Head of caudate nucleus (tissue), 42 donors: ENCODE measurements at regions of chr4 and their contacts with region 1.

Region 1: GRCh38 chr4:1693129-1693896 is 9.2 kb upstream of the FAM53A start:
- DNase-seq: peak in 39 of 42 donors; percentile 49 to 88 (median 69)

Region 2: DNA sequence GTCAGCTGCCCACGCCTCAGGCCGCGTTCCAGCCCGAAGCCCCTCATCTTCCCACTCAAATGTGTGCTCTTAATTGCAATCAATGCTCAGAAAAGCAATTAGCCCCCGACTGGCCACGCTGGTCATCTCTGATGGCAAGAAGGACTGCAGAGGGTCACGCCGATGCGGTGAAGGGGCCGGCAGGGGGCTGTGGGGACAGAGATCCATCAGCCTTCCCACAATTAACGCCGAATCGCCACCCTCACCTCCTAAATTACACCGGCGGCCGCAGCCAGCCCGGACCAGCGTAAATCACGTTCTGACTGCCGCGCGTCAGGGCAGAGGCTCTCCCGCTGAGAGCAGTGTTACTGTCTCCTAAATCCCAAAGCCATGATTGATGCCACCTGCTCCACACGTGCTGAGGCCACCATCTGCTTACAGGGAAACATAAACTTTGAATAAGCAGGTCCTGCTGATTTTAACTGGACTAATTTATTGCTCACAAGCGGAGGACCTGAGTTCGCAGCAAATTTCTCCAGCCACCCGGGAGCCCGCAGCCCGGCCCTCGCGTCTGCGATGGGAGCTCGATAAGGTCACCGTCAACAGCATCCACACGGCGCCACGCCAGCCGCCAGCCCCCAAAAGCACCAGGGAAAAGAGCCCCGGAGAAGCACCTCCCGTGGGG is 159.8 kb before region 1 on chr4:
- intact Hi-C with region 1: no loop called
- DNase-seq: no peak

Region 3: DNA sequence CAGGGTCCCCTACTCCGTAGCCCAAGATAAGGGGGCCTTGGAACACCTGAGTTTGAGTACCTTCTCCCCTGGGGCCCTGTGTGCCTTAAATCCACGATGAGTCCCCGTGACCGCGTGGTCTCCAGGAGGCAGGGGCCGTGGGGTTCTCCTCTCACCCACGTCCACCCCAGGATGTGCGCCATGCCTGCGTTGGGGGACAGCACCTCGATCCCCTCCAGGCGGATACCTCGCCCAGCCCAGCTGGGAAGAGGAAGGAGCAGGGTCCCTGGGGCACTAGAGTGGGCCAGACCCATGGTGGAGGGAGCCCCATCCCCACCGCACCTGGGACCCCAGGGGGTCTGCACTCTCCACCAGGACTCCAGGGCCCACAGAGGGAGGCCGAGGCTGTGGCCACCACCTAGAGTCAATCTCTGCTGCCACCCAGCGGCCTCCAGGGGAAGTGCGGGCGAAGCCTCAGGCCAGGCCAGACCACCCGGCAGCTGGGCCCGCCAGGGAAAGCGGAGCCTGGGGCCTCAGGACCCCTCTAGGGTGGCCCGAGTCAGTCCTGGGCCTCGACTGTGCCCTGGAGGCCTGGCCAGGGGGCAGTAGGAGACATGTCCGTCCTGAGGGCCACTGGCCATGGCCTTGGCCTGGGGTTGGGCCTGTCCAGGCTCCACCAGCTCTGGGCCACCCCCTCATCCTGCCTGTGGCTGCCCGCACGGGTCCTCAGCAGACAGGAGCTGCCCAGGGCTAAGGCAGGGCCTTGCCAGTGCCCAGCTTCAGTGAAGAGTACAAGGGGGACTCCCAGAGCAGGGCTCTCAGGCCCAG is 64.2 kb before region 1 on chr4:
- intact Hi-C with region 1: no loop called
- DNase-seq: peak; percentile 23 to 89 (median 72)

Region 4: DNA sequence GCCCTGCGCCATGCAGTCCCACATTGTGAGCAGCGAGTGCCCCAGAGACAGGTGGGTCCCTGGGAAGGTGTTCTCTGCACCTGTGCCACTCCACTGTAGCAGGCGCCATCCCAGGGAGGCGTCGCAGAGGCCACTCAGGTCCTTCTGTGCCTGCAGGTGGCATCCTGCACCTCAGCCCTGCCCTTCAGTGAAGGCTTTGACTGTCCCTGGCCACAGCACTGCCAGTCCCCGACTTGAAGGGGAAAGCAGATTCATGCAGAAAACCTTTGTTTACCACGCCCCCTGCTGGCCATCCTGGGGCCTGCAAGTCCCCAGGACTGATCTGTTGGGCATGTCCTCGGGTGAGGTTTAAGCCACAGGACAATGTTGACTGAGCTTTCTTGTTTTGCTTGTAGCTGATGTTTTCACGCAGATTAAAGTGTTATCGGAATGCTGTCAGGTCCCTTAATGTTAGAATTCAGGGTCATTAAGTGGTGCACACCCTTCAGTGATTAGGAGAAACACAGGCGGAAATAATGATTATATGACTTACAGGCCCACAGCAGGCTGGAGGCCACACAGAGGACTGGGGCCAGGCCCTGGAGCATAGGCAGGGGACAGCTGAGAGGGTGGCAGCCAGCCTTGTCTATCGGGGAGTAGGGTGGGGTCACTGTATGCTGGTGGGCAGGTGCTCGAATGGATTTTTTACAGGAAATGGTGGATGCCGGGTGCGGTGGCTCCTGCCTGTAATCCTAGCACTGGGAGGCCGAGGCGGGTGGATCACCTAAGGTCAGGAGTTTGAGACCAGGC is 33.0 kb after region 1 on chr4:
- intact Hi-C with region 1: loop called (anchors 5 kb)
- DNase-seq: peak; percentile 60 to 97 (median 93)